Heart left ventricle (tissue), 16 donors: ENCODE measurements at regions of chrX and their contacts with region 1.

Region 1: GRCh38 chrX:27915617-27916016 is 65.6 kb downstream of the DCAF8L1 start:
- DNase-seq: no peak
- ATAC-seq: no peak
- H3K4me3 ChIP-seq: no peak overlapping the region
- H3K27ac ChIP-seq: no peak overlapping the region
- H3K4me1 ChIP-seq: no peaks in the 10 kb centered on the region
- H3K27me3 ChIP-seq: no peaks in the 10 kb centered on the region
- CTCF ChIP-seq: no peak
- POLR2A ChIP-seq: no peak

Region 2: DNA sequence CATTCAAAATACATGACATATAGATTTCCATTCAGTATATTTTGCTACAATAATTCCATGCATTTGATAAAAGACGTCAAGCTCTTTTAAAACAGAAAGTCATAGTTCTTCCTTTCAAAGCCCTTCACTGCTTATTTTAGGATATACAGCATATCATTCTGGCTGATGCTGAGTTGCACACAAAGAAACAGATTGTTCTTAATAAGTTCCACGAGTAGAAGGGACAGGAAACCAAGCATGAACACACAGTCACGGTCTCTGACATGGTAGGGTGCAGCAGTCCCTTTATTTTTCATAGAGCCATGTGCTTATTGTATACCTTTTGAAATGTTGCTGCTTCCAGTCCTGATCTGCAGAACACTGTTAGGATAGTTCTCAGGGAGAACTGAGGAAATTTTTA is 22.4 kb before region 1 on chrX:
- intact Hi-C with region 1: loop called in 1 of 10 experiments (anchors 2 kb)
- DNase-seq: no peak
- ATAC-seq: no peak
- H3K4me3 ChIP-seq: no peak overlapping the region
- H3K27ac ChIP-seq: no peak overlapping the region
- H3K4me1 ChIP-seq: no peaks in the 10 kb centered on the region
- H3K27me3 ChIP-seq: no peaks in the 10 kb centered on the region
- CTCF ChIP-seq: no peak
- POLR2A ChIP-seq: no peak